ENCODE measurements at regions of chr2 and their contacts with region 1.

Region 1: DNA sequence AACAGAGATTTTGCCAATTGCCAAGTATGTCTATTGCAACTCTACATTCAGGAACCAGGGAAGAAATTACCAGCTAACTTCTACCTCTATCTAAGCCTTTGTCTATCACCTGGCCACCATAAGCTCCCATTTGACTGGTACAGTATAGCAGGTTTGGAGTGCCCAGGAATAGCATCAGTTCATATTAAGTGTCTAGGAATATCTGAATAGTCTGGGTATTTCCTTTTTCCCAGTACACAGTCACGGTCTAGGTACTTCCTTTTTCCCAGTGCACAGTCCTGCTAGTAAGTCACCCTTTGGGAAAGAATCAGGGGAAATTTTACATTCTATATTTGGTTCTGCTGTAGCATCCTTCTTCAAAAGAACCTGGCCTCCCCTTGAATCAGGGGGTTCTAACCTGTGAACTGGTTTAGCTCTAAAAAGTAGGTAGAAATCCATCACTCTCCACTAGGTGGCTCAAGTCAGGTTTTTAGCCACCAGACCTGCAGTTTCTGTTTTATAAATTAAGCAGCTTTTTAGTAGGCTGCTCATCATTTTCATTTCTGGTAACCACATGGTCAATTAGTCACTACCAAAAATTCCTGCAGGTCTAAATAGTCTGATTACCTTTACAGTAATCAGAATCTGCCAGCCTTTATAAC is 49.3 kb upstream of the DNAJC10 start:
- DNase-seq: no peak
- ATAC-seq: no peak
- H3K4me3 ChIP-seq: no peak overlapping the region
- H3K27ac ChIP-seq: no peak overlapping the region
- H3K4me1 ChIP-seq: no peaks in the 10 kb centered on the region
- H3K27me3 ChIP-seq: no peaks in the 10 kb centered on the region
- CTCF ChIP-seq: peak; percentile 10 to 55 (median 42)
- POLR2A ChIP-seq: no peak

Region 2: DNA sequence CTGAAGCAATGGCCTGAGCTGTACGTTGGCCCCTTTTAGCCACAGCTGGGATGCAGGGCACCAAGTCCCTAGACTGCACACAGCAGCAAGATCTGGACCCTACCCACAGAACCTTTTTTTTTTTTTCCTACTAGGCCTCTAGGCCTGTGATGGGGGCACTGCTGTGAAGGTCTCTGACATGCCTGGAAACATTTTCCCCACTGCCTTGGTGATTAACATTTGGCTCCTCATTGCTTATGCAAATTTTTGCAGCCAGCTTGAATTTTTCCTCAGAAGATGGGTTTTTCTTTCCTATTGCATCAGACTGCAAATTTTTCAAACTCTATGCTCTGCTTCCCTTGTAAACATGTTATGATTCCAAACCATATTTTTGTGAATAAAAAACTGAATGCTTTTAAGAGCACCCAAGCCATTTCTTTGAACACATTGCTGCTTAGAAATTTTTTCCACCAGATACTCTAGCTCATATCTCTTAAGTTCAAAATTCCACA is 273.5 kb before region 1 on chr2:
- intact Hi-C with region 1: no loop called
- DNase-seq: no peak
- ATAC-seq: no peak
- H3K4me3 ChIP-seq: no peak overlapping the region
- H3K27ac ChIP-seq: no peak overlapping the region
- H3K4me1 ChIP-seq: peaks cover 0 to 5% (median 0%) of the 10 kb centered on the region in 12 donors
- H3K27me3 ChIP-seq: no peaks in the 10 kb centered on the region
- CTCF ChIP-seq: no peak
- POLR2A ChIP-seq: no peak

Region 3: DNA sequence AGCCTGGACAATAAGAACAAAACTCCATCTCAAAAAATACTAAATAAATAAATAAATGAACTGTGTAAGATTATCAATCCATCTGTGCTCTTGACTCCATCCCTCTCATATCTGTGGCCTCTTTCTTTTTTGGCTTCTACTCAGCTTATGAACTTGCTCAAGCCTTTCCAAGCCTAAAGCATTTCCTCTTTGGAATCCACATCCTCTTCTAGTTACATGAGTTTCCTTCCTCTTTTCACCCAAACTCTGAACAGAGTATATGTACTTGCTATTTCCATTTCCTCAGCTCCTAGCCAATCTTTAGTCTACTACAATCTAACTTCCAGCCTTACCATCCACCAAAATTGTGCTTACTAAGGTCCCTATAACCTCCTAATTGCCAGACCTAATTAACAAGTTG is 46.8 kb after region 1 on chr2:
- intact Hi-C with region 1: loop called in 2 of 10 experiments (anchors 5 kb)
- DNase-seq: no peak
- ATAC-seq: no peak
- H3K4me3 ChIP-seq: no peak overlapping the region
- H3K27ac ChIP-seq: peak overlapping the region in 1 of 12 donors; percentile 92
- H3K4me1 ChIP-seq: peaks cover 0 to 46% (median 24%) of the 10 kb centered on the region in 12 donors
- H3K27me3 ChIP-seq: no peaks in the 10 kb centered on the region
- CTCF ChIP-seq: no peak
- POLR2A ChIP-seq: no peak

Region 4: GRCh38 chr2:182852084-182852483 is 185.3 kb after region 1 on chr2:
- intact Hi-C with region 1: no loop called
- DNase-seq: peak in 2 of 5 donors; percentile 26 to 38
- ATAC-seq: peak in 1 of 4 donors; percentile 28
- H3K4me3 ChIP-seq: no peak overlapping the region
- H3K27ac ChIP-seq: peak overlapping the region in 5 of 12 donors; percentile 1 to 25 (median 11)
- H3K4me1 ChIP-seq: peaks cover 0 to 9% (median 0%) of the 10 kb centered on the region in 12 donors
- H3K27me3 ChIP-seq: no peaks in the 10 kb centered on the region
- CTCF ChIP-seq: no peak
- POLR2A ChIP-seq: no peak

Measured in heart left ventricle (tissue), 16 donors.